Left cardiac atrium (tissue), 4 donors: ENCODE measurements at regions of chr13 and their contacts with region 1.

Region 1: DNA sequence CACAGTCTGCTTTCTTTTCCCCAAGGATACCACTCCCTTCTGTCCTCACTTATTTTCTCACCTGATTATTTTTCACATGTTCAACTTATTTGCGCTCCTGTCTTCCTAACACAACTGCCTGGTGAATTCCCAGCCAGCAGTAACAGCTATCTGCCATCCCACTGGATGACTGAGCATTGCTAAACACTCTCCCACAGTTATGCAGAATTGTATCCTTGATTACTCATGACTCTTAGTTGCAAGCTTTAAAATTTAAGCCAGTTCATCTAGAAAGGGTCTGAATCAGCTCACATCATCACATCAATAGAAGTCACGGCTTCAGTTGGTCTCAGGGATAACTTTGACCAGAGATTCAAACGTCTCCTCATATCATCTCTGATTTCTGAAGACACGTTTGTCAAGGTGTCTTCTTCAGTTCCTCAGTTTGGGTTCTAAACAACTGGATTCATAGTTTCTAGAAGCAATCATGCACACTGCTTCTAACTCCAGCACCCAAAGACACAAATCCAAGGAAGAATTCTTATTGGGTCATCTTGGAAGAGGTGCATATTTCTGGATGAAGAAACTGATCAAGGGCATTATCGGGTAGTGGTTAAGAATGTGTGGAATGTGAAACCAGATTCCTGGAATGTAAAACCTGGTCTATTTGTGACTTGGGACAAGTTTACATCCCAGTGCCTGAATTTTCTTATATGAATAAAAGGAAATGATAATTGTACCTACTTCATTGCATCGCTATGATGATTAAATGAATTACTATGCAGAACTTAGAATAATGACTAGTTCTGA is 13.9 kb upstream of the DACH1 start:
- DNase-seq: no peak
- ATAC-seq: no peak

Region 2: DNA sequence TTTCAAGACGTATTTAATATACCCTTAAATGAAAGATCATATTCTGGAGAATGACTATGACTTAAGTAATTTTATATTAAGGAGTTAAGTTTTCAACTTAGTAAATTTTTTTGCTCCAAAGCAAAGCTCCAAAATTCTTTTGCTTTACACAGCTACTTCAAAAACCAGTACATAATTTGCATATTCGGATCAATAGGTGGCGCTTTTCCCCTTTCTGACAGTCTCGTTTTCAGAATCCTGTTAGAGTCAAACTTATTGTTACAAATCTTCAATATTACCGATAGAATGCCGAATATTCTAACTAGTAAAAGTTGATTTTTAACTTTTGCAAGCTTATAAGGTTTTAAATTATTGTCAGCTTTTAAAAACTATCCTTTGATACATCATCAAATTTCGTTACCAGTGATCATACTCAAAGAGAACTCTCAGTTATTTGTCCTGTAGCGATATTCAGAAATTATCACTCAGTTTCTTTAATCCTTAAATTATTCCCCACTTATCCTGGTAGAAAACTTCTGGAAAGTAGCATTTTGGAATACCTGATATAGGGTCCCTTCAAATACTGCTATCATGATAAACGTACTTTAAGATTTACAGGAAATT is 920.0 kb before region 1 on chr13:
- intact Hi-C with region 1: loop called in 1 of 2 experiments (anchors 10 kb)
- DNase-seq: no peak
- ATAC-seq: no peak

Region 3: DNA sequence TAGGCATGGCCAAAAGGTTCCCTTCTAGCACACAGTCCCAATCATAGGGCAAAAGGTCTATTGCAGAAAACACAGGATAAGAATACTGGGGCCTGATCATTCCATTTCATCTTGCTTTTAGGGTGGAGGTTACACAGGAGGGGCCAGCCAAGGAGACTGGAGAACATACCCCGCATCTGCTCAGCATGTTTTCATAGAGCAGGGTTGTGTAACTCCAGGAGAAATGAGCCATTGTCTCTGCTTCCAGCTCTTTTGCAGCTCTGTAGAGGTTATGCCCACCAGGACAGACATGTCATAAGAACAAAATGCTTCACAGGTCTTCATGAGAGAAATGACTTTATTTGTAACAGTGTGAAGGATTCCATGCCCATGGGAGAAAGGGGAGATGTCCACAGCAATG is 756.7 kb before region 1 on chr13:
- intact Hi-C with region 1: no loop called
- DNase-seq: no peak
- ATAC-seq: no peak

Region 4: GRCh38 chr13:71303144-71303543 is 577.8 kb before region 1 on chr13:
- intact Hi-C with region 1: loop called in 1 of 2 experiments (anchors 10 kb)
- DNase-seq: no peak
- ATAC-seq: no peak

Region 5: GRCh38 chr13:71939186-71939585 is 58.2 kb after region 1 on chr13:
- intact Hi-C with region 1: no loop called
- DNase-seq: no peak
- ATAC-seq: no peak

Region 6: GRCh38 chr13:72458701-72459100 is 577.8 kb after region 1 on chr13:
- intact Hi-C with region 1: no loop called
- DNase-seq: no peak
- ATAC-seq: peak in 1 of 2 donors; percentile 47